ENCODE measurements at regions of chr7 and their contacts with region 1.

Region 1: GRCh38 chr7:76179686-76180085 is 22.0 kb upstream of the SRRM3 start:
- DNase-seq: no peak
- ATAC-seq: no peak
- H3K4me3 Mint-ChIP-seq: no peak overlapping the region
- H3K27ac Mint-ChIP-seq: no peak overlapping the region
- H3K4me1 Mint-ChIP-seq: peaks cover 5% of the 10 kb centered on the region; the same call in 1 of the 2 replicates
- H3K27me3 Mint-ChIP-seq: no peaks in the 10 kb centered on the region; the same call in none of the 2 replicates
- CTCF ChIP-seq: no peak

Region 2: GRCh38 chr7:76069238-76069638 is 110.4 kb before region 1 on chr7:
- CTCF ChIA-PET with region 1: interaction called, 15 read pairs
- POLR2A ChIA-PET with region 1: no interaction called
- DNase-seq: peak; percentile 43
- ATAC-seq: peak; percentile 64
- H3K4me3 Mint-ChIP-seq: no peak overlapping the region
- H3K27ac Mint-ChIP-seq: peak overlapping the region; percentile 57; the same call in 1 of the 2 replicates
- H3K4me1 Mint-ChIP-seq: peaks cover 3% of the 10 kb centered on the region; the same call in 1 of the 2 replicates
- H3K27me3 Mint-ChIP-seq: no peaks in the 10 kb centered on the region
- CTCF ChIP-seq: no peak

Region 3: GRCh38 chr7:76166404-76167255 is 13.1 kb before region 1 on chr7:
- CTCF ChIA-PET with region 1: interaction called, 17 read pairs
- POLR2A ChIA-PET with region 1: interaction called, 7 read pairs
- DNase-seq: peak; percentile 98
- ATAC-seq: peak; percentile 70
- H3K4me3 Mint-ChIP-seq: peak overlapping the region; percentile 70
- H3K27ac Mint-ChIP-seq: peak overlapping the region; percentile 99
- H3K4me1 Mint-ChIP-seq: peaks cover 35% of the 10 kb centered on the region
- H3K27me3 Mint-ChIP-seq: no peaks in the 10 kb centered on the region
- CTCF ChIP-seq: no peak

Region 4: DNA sequence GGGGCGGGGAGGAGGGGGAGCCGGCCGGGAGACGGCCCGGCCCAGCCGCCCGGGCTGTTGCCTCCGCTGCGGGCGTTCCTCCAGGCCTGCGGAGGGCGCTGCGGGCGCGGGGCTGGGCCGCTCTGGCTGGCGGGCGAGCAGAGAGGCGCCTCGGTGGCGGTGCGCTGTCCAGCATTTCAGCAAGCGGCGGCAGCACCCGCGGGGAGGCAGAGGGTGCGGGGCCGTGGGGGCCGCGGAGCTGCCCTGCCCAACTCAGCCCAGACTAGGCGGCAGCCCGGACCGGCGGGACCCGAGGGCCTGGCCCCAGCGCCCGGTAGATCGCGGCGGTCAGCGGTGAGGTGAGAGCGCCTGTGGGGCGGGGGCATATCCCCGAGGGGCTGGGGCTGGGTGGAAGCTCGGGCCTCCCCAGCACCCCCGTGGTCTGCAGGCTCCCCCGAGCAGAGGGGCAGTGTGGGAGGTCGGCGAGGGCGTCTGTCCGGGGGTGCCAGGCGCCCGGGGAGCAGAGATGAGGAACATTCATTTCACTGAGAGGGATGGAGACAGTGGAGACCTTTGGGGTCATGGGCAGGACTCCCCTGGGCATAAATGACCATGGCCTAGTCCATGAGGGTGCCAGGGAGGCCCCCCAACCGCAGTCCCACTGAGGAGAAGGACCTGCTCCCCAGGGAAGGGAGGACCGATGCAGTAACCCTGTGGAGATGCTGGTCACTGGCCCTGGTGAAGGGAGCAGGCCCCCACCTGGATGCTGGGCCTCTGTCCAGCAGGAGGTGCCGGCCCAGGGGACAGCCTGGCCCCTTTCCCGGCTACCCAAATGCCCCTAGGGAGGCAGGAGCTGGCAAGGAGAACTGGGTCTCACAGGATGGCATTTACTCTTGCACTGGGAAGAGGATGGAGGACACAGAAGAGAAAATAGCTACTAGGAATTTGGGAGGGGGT is 22.3 kb after region 1 on chr7 and contains the start of gene SRRM3:
- CTCF ChIA-PET with region 1: interaction called, 24 read pairs
- POLR2A ChIA-PET with region 1: interaction called, 3 read pairs
- DNase-seq: peak; percentile 91
- ATAC-seq: peak; percentile 73
- H3K4me3 Mint-ChIP-seq: peak within 1 kb of the TSS; percentile 66
- H3K27ac Mint-ChIP-seq: no peak within 1 kb of the TSS
- H3K4me1 Mint-ChIP-seq: peaks cover 31% of the 10 kb centered on the region
- H3K27me3 Mint-ChIP-seq: peaks cover 22% of the 10 kb centered on the region
- CTCF ChIP-seq: peak; percentile 54; the same call in 1 of the 2 replicates
- total RNA-seq, gene SRRM3: 17.7 to 24.6 TPM (median 20.7 TPM) in 3 replicates

Region 5: GRCh38 chr7:76220185-76221057 is 40.7 kb after region 1 on chr7:
- CTCF ChIA-PET with region 1: interaction called, 10 read pairs
- POLR2A ChIA-PET with region 1: interaction called, 5 read pairs
- DNase-seq: peak; percentile 84
- ATAC-seq: peak; percentile 56
- H3K4me3 Mint-ChIP-seq: no peak overlapping the region; the same call in 1 of the 2 replicates
- H3K27ac Mint-ChIP-seq: peak overlapping the region; percentile 84; the same call in 1 of the 2 replicates
- H3K4me1 Mint-ChIP-seq: peaks cover 76% of the 10 kb centered on the region
- H3K27me3 Mint-ChIP-seq: no peaks in the 10 kb centered on the region; the same call in 1 of the 2 replicates
- CTCF ChIP-seq: no peak

Region 6: GRCh38 chr7:76234931-76235441 is 55.3 kb after region 1 on chr7:
- CTCF ChIA-PET with region 1: interaction called, 26 read pairs
- POLR2A ChIA-PET with region 1: interaction called, 3 read pairs
- DNase-seq: peak; percentile 98
- ATAC-seq: peak; percentile 86
- H3K4me3 Mint-ChIP-seq: peak overlapping the region; percentile 70
- H3K27ac Mint-ChIP-seq: peak overlapping the region; percentile 89; the same call in 1 of the 2 replicates
- H3K4me1 Mint-ChIP-seq: peaks cover 69% of the 10 kb centered on the region
- H3K27me3 Mint-ChIP-seq: no peaks in the 10 kb centered on the region; the same call in none of the 2 replicates
- CTCF ChIP-seq: no peak

Region 7: DNA sequence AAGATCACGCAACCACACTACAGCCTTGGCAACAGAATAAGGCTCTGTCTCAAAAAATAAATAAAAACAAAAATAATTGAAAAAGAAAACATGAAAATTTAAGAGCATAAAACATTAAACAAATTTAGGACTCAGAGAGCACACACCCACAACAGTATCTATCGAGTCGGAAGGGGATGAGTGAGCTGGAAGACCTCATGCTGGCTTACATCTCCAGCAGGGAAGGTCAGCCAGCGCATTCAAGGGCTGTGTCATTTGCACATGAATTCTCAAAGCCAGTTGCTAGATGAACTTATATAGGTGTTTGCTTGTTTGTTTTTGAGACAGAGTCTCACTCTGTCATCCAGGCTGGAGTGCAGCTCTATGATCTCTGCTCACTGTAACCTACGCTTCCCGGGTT is 72.3 kb after region 1 on chr7:
- CTCF ChIA-PET with region 1: interaction called, 10 read pairs
- POLR2A ChIA-PET with region 1: no interaction called
- DNase-seq: no peak
- ATAC-seq: peak; percentile 60
- H3K4me3 Mint-ChIP-seq: peak overlapping the region; percentile 14
- H3K27ac Mint-ChIP-seq: peak overlapping the region; percentile 33
- H3K4me1 Mint-ChIP-seq: peaks cover 22% of the 10 kb centered on the region
- H3K27me3 Mint-ChIP-seq: no peaks in the 10 kb centered on the region
- CTCF ChIP-seq: no peak

Measured in WTC11 (cell line).